ENCODE measurements at regions of chr6 and their contacts with region 1.

Region 1: GRCh38 chr6:3742426-3743344 is 8.8 kb downstream of the PXDC1 start:
- DNase-seq: peak; percentile 80 to 99 (median 91)
- ATAC-seq: peak; percentile 92 to 98 (median 95)
- H3K4me3 ChIP-seq: no peak overlapping the region
- H3K27ac ChIP-seq: peak overlapping the region in 3 of 4 donors; percentile 11 to 48 (median 20)
- H3K4me1 ChIP-seq: peaks cover 0 to 5% (median 0%) of the 10 kb centered on the region in 3 donors
- H3K27me3 ChIP-seq: no peaks in the 10 kb centered on the region
- CTCF ChIP-seq: peak; percentile 87 to 95 (median 92)

Region 2: GRCh38 chr6:3281631-3282475 is 460.8 kb before region 1 on chr6:
- intact Hi-C with region 1: loop called in 1 of 3 experiments (anchors 5 kb)
- DNase-seq: peak in 1 of 6 donors; percentile 25
- ATAC-seq: no peak
- H3K4me3 ChIP-seq: no peak overlapping the region
- H3K27ac ChIP-seq: no peak overlapping the region
- H3K4me1 ChIP-seq: peaks cover 0 to 3% (median 0%) of the 10 kb centered on the region in 3 donors
- H3K27me3 ChIP-seq: no peaks in the 10 kb centered on the region
- CTCF ChIP-seq: no peak

Region 3: DNA sequence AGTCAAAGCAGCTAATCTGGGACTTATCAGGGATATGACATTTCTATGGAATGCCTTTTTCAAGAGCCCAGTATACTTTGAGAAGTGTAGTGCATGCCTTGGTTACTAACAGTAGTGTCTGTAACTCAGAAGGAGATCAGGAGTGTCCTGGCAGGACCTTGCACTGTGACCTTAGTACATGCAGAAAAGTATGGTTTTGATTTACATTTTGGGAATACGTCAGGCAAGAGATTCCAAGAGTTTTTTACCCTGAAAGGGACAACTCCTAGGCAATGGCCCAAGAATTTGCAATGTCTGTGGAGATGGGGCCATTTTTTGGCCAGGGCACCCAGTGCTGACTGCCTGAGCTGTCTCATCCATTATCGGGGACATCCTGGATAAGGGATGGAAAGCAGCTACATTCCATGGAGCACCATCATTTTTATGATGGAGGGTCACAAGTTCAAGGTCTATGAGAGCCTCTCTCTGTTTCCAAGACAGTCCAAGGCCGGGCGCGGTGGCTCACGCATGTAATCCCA is 186.7 kb after region 1 on chr6:
- intact Hi-C with region 1: loop called in 1 of 3 experiments (anchors 5 kb)
- DNase-seq: no peak
- ATAC-seq: peak in 1 of 4 donors; percentile 10
- H3K4me3 ChIP-seq: no peak overlapping the region
- H3K27ac ChIP-seq: no peak overlapping the region
- H3K4me1 ChIP-seq: no peaks in the 10 kb centered on the region
- H3K27me3 ChIP-seq: no peaks in the 10 kb centered on the region
- CTCF ChIP-seq: no peak

Region 4: GRCh38 chr6:3990692-3991501 is 248.2 kb after region 1 on chr6:
- intact Hi-C with region 1: loop called in 2 of 3 experiments (anchors 5 to 10 kb)
- DNase-seq: peak; percentile 78 to 89 (median 88)
- ATAC-seq: peak; percentile 92 to 99 (median 98)
- H3K4me3 ChIP-seq: peak overlapping the region in 2 of 4 donors; percentile 29 to 37
- H3K27ac ChIP-seq: peak overlapping the region in 2 of 4 donors; percentile 34 to 41
- H3K4me1 ChIP-seq: peaks cover 0 to 5% (median 4%) of the 10 kb centered on the region in 3 donors
- H3K27me3 ChIP-seq: no peaks in the 10 kb centered on the region
- CTCF ChIP-seq: peak; percentile 65 to 79 (median 70)

Region 5: GRCh38 chr6:4008324-4009047 is 265.8 kb after region 1 on chr6:
- intact Hi-C with region 1: loop called in 1 of 3 experiments (anchors 10 kb)
- DNase-seq: peak in 1 of 6 donors; percentile 30
- ATAC-seq: peak; percentile 84 to 98 (median 95)
- H3K4me3 ChIP-seq: no peak overlapping the region
- H3K27ac ChIP-seq: no peak overlapping the region
- H3K4me1 ChIP-seq: peaks cover 0 to 4% (median 0%) of the 10 kb centered on the region in 3 donors
- H3K27me3 ChIP-seq: no peaks in the 10 kb centered on the region
- CTCF ChIP-seq: peak in 2 of 4 donors; percentile 19 to 20

Region 6: GRCh38 chr6:4291453-4292403 is 549.0 kb after region 1 on chr6:
- intact Hi-C with region 1: no loop called
- DNase-seq: no peak
- ATAC-seq: no peak
- H3K4me3 ChIP-seq: no peak overlapping the region
- H3K27ac ChIP-seq: no peak overlapping the region
- H3K4me1 ChIP-seq: no peaks in the 10 kb centered on the region
- H3K27me3 ChIP-seq: no peaks in the 10 kb centered on the region
- CTCF ChIP-seq: no peak